BJ (cell line): ENCODE measurements at regions of chr1 and their contacts with region 1.

Region 1: DNA sequence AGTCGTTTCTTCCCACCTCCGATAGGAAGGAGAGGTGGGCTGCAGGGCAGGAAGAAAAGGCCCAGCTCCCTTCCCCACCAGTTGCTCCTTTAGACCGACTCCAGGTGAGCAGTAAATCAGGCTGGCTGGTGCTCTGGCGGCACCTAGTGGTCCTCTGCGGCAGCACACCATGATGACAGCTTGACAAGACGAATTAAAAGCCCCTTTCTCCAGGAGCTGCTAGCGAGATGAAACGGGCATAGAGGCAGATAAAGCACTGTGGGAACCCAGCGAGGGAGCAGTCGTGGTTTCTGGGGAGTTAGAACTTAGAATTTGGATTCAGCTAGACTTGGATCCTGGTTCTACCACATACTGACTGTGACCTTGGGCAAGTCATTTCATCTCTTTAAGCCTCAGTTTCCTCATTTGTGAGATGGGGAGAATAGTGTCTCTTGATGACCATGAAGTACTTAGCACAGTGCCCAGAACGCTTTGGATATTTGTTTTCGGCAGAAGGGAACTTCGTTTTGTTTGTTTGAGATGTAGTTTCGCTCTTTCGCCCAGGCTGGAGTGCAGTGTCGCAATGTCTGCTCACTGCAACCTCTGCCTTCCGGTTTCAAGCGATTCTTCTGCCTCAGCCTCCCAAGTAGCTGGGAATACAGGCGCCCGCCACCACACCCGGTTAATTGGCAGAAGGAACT is 21.8 kb upstream of the COL9A2 start:
- DNase-seq: peak; percentile 15
- H3K4me3 ChIP-seq: no peak overlapping the region
- H3K27me3 ChIP-seq: peaks cover 2% of the 10 kb centered on the region
- CTCF ChIP-seq: peak; percentile 99

Region 2: DNA sequence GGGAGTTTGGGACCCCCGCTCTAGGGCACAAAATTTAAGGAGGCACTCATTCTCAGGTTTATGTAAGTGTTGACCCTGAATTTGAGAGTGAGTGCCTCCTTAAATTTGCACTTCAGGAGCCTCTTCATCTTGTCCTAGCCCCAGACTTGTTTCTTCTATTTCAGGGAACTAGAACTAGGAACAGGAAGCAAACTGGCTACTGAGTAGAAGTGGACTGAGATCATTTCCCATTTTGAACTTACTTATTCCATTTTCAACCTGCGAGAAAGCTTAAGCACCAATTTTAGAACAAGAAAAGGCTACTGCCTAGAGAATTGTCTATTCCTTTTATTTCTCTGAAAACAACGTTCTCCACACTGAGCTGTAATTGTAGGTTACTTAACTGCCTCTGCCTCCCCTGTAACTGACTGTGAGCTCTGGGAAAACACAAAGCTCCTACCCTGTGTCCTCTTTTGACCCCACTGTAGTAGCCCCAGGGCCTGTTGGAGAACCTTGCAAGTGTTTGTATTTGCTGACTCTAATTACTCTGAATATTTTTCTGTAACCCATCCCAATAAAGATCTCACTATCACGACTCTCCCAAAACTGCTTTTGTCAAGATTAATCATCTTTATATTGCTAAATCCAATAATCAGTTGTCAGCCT is 244.3 kb before region 1 on chr1:
- CTCF ChIA-PET with region 1: interaction called, 15 read pairs
- POLR2A ChIA-PET with region 1: no interaction called
- DNase-seq: no peak
- H3K4me3 ChIP-seq: no peak overlapping the region
- H3K27me3 ChIP-seq: no peaks in the 10 kb centered on the region
- CTCF ChIP-seq: no peak

Region 3: DNA sequence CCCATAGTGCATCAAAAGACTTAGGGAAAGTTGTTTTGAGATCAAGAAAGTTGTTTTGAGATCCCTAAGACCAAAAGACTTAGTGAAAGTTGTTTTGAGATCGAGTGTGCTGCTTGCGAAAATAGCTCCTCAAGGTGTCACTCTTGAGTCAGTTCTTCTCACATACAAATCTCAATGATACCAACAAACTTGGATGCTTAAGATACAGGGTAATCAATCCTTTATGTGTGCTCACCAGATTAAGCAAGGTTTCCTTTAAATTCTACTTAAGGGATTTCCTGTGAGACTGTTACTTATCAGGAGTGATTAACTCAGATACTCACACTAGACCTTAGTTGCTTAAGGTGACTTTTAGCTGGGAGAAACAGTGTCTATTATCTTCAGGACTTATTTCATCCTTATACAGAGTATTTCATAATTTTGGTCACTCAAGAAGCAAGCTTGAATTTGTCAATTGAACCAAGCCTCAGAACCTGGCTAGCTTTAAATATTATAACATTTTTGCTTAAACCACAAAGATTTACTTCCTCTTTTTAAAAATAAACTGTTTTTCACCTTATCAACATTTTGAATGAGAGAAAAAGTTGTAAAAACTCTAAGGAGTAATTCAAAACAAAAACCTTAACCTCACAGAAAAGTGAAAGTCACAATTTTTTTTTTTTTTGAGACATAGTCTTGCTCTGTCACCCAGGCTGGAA is 185.7 kb before region 1 on chr1:
- CTCF ChIA-PET with region 1: interaction called, 207 read pairs
- POLR2A ChIA-PET with region 1: interaction called, 7 read pairs
- DNase-seq: no peak
- H3K4me3 ChIP-seq: no peak overlapping the region
- H3K27me3 ChIP-seq: peaks cover 6% of the 10 kb centered on the region; the same call in 1 of the 2 replicates
- CTCF ChIP-seq: peak; percentile 75

Region 4: GRCh38 chr1:40352126-40352525 is 13.2 kb after region 1 on chr1:
- CTCF ChIA-PET with region 1: interaction called, 12 read pairs
- POLR2A ChIA-PET with region 1: no interaction called
- DNase-seq: no peak
- H3K4me3 ChIP-seq: no peak overlapping the region
- H3K27me3 ChIP-seq: no peaks in the 10 kb centered on the region; the same call in 1 of the 2 replicates
- CTCF ChIP-seq: no peak

Region 5: GRCh38 chr1:40385437-40386358 is 46.8 kb after region 1 on chr1:
- CTCF ChIA-PET with region 1: interaction called, 14 read pairs
- POLR2A ChIA-PET with region 1: no interaction called
- DNase-seq: no peak
- H3K4me3 ChIP-seq: no peak overlapping the region
- H3K27me3 ChIP-seq: no peaks in the 10 kb centered on the region
- CTCF ChIP-seq: no peak